PC-9 (cell line): ENCODE measurements at regions of chr4 and their contacts with region 1.

Region 1: DNA sequence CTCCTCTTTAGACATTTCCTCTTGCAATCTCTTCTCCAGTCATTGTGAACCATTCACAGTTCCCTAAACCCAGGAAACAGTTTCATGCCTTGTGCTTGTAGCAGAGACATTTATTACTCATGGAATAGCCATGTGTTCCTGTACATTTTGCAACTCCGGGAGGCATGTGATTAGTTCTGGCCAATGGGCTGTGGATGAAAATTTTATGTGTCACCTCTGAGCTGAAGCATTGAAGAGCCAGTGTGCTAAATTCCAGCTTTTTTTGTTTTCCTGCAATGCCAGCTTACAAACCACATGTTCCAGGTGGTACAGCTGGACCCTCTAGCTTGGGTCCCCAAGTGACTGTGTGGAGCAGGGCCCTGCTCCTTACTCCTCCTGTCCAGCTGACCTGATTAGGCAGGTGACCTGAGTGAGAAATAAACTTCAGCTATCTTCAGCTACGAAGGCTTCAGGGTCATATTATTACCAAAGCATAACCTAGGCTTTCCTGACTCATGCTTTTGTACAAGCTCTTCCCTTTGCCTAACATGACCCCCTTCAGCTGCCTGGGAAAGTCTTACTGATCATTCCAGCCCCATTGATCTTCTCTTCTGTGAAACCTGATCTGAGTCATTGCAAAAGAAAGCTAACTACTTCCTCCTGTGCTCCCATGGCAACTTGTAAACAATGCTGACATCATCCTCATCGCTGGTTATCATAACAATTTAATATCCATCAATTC is 200.4 kb downstream of the PTTG2 start:
- DNase-seq: peak; percentile 63 to 96
- H3K4me3 ChIP-seq: peak overlapping the region; percentile 4; the same call in 1 of the 2 replicates
- H3K27ac ChIP-seq: peak overlapping the region; percentile 96
- H3K4me1 ChIP-seq: peaks cover 71% of the 10 kb centered on the region
- H3K27me3 ChIP-seq: no peaks in the 10 kb centered on the region
- CTCF ChIP-seq: no peak

Region 2: GRCh38 chr4:37928426-37929416 is 231.9 kb before region 1 on chr4:
- CTCF ChIA-PET with region 1: no interaction called
- POLR2A ChIA-PET with region 1: no interaction called
- intact Hi-C with region 1: no loop called
- DNase-seq: no peak
- H3K4me3 ChIP-seq: no peak overlapping the region
- H3K27ac ChIP-seq: no peak overlapping the region
- H3K4me1 ChIP-seq: no peaks in the 10 kb centered on the region
- H3K27me3 ChIP-seq: no peaks in the 10 kb centered on the region
- CTCF ChIP-seq: no peak

Region 3: GRCh38 chr4:38078590-38079421 is 81.8 kb before region 1 on chr4:
- CTCF ChIA-PET with region 1: no interaction called
- POLR2A ChIA-PET with region 1: no interaction called
- intact Hi-C with region 1: loop called (anchors 2 kb)
- DNase-seq: peak in 1 of 2 experiments; percentile 89
- H3K4me3 ChIP-seq: no peak overlapping the region
- H3K27ac ChIP-seq: peak overlapping the region; percentile 80
- H3K4me1 ChIP-seq: peaks cover 81% of the 10 kb centered on the region
- H3K27me3 ChIP-seq: no peaks in the 10 kb centered on the region
- CTCF ChIP-seq: no peak

Region 4: GRCh38 chr4:38109896-38110295 is 50.8 kb before region 1 on chr4:
- CTCF ChIA-PET with region 1: no interaction called
- POLR2A ChIA-PET with region 1: no interaction called
- intact Hi-C with region 1: no loop called
- DNase-seq: peak in 1 of 2 experiments; percentile 22
- H3K4me3 ChIP-seq: no peak overlapping the region
- H3K27ac ChIP-seq: no peak overlapping the region
- H3K4me1 ChIP-seq: no peaks in the 10 kb centered on the region
- H3K27me3 ChIP-seq: no peaks in the 10 kb centered on the region
- CTCF ChIP-seq: no peak

Region 5: DNA sequence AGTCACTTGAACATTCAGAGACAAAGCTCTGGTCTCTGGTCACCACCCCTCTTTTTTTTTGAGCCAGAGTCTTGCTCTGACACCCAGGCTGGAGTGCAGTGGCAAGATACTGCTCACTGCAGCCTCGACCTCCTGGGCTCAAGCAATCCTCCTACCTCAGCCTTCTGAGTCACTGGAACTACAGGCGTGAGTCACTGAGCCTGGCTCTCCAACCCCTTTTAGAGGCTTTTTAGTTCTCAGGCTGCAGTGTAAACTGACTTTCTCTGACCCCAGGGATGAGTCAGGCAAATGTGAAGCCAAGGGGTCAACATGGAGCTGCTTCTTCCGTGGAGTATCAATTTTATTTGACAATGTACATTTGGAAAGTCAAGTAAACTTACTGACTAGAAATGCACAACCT is 28.8 kb after region 1 on chr4:
- CTCF ChIA-PET with region 1: no interaction called
- POLR2A ChIA-PET with region 1: no interaction called
- intact Hi-C with region 1: loop called (anchors 1 kb)
- DNase-seq: peak; percentile 56 to 94
- H3K4me3 ChIP-seq: no peak overlapping the region; the same call in 1 of the 2 replicates
- H3K27ac ChIP-seq: peak overlapping the region; percentile 99
- H3K4me1 ChIP-seq: peaks cover 37% of the 10 kb centered on the region
- H3K27me3 ChIP-seq: no peaks in the 10 kb centered on the region
- CTCF ChIP-seq: no peak

Region 6: DNA sequence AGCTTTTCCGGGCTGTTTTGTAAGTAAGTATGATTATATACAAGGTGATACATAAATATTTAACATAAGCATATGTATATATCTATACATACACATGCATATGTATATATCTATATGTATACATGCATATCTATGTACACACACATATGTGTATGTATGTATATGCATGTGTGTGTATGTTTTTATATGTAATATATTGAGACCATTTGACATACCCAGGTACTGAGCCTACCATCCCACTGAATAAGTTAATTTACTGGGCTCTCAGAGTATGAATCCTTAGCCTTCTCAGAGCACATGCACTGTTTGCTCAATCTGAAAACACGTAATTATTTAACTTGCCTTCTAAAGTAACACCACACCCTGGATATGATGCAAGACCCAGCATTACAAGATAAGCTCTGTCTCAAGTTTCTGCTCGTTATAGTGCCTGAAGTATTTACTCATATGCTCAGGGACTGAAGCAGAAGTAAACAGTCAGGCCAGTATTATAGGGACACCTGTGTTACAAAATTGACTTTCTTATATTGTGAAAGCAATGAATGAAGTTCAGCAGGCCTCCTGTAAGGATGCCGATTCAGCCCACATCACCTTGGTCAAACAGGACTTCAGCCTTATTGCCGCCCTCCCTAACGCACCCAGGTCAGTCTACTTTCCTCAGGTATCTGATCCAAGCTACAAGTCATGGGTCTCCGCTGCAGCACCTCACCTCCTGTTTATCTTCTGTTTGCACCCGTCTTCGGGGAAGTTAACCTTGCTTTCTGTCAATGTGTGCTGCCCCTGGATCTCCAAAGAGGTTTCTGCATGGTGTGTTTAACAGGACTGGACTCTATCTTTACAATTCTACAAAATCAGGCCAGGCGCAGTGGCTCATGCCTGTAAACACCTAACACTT is 460.4 kb after region 1 on chr4:
- CTCF ChIA-PET with region 1: no interaction called
- POLR2A ChIA-PET with region 1: no interaction called
- intact Hi-C with region 1: no loop called
- DNase-seq: peak; percentile 41 to 99
- H3K4me3 ChIP-seq: peak overlapping the region; percentile 31; the same call in 1 of the 2 replicates
- H3K27ac ChIP-seq: peak overlapping the region; percentile 78
- H3K4me1 ChIP-seq: peaks cover 54% of the 10 kb centered on the region
- H3K27me3 ChIP-seq: no peaks in the 10 kb centered on the region
- CTCF ChIP-seq: no peak

Region 7: GRCh38 chr4:38730830-38731646 is 570.4 kb after region 1 on chr4:
- CTCF ChIA-PET with region 1: interaction called, 4 read pairs
- POLR2A ChIA-PET with region 1: no interaction called
- intact Hi-C with region 1: loop called (anchors 5 kb)
- DNase-seq: peak; percentile 74 to 87
- H3K4me3 ChIP-seq: no peak overlapping the region
- H3K27ac ChIP-seq: peak overlapping the region; percentile 13; the same call in 1 of the 2 replicates
- H3K4me1 ChIP-seq: peaks cover 35% of the 10 kb centered on the region
- H3K27me3 ChIP-seq: no peaks in the 10 kb centered on the region
- CTCF ChIP-seq: peak; percentile 94

Region 8: DNA sequence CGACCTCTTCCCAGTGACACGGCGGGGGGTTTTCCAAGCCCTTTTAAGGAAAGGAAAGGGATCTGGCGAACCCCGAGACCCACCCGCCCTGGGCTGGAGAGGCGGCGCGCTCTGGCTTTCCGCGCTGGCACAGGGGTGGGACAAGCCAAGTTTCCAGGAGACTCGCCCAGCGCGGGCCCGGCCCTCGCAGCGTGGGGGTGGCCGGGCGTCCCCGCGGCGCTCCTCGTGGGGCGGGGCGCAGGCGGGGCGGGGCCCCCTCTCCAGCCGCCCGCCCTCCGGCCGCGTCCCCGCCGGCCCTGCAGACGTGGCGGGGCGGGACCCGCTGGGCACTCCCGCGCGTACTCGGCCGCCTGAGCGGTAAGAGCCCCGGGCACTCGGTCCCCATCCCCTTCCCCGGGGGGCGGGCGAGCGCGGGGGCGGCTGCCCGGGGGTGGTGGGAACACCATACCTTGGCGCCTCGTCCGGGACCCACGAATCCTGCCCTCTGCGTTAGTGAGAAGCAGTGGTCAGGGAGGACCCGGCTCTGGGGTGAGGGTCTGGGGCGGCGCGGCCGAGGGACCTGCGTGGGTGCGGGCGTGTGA is 706.9 kb after region 1 on chr4 and contains the start of gene FAM114A1:
- CTCF ChIA-PET with region 1: interaction called, 3 read pairs
- POLR2A ChIA-PET with region 1: interaction called, 12 read pairs
- intact Hi-C with region 1: no loop called
- DNase-seq: peak; percentile 50 to 86
- H3K4me3 ChIP-seq: peak within 1 kb of the TSS; percentile 55
- H3K27ac ChIP-seq: peak within 1 kb of the TSS; percentile 41; the same call in 1 of the 2 replicates
- H3K4me1 ChIP-seq: peaks cover 23% of the 10 kb centered on the region
- H3K27me3 ChIP-seq: no peaks in the 10 kb centered on the region
- CTCF ChIP-seq: no peak
- total RNA-seq, gene FAM114A1: 73.7 and 80.4 TPM in 2 replicates